Naive thymus-derived CD8-positive, alpha-beta T cell (primary cell): ENCODE measurements at regions of chr13 and their contacts with region 1.

Region 1: DNA sequence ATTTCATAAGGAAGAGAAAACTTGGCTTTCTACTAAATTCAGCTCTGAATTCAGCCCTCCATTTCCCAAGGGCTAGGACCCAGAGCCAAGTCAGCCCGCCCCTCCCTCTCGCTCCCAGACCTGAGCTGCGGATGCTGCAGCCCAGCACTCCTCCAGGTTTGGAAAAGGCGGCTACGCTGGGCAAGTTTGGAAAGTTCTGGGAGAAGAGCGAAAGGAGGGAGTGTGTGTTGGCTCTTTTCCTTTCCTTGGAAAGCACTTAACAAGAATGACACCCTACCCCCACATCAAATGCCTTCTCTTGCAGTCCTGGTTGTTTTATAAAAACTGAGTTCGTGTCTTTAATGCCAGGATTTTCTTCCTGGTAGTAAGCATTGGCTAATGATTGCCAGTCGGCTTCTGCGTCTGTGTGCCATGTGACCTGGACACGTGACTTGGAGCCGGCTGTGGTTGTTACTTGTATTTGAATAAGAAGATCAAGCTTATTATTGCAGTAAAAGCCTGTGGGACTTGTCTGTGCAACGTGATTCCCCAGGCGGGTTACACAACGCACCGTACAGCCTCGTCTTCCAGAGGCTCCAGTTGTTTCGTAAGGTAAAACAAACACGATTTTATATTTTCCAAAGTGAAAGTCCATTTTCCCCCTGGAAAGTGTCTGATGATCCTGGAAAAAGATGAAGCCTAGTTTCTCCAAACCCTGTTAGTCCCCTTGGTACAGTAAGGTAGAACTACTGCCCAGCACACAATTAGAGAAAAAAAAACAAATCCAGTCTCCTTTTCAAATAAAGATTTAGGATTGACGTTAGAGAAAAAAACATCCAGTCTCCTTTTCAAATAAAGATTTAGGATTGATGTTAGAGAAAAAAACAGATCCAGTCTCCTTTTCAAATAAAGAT is 26.9 kb upstream of the UBE2L5 start:
- DNase-seq: peak; percentile 41 to 90 (median 70)
- ATAC-seq: peak; percentile 69 to 81
- H3K4me3 Mint-ChIP-seq: peak overlapping the region; percentile 80 to 100 (median 92)
- H3K27ac Mint-ChIP-seq: peak overlapping the region; percentile 78 to 100 (median 96)
- H3K4me1 Mint-ChIP-seq: peaks cover 25 to 62% (median 49%) of the 10 kb centered on the region in 4 donors
- H3K27me3 Mint-ChIP-seq: no peaks in the 10 kb centered on the region

Region 2: GRCh38 chr13:30382836-30383525 is 12.5 kb before region 1 on chr13:
- POLR2A ChIA-PET with region 1: interaction called, 16 read pairs
- DNase-seq: peak in 1 of 10 donors; percentile 36
- ATAC-seq: peak; percentile 22 to 61
- H3K4me3 Mint-ChIP-seq: peak overlapping the region in 7 of 10 donors; percentile 13 to 64 (median 47)
- H3K27ac Mint-ChIP-seq: peak overlapping the region; percentile 19 to 83 (median 52)
- H3K4me1 Mint-ChIP-seq: peaks cover 22 to 56% (median 39%) of the 10 kb centered on the region in 4 donors
- H3K27me3 Mint-ChIP-seq: no peaks in the 10 kb centered on the region

Region 3: GRCh38 chr13:30408319-30409101 is 13.1 kb after region 1 on chr13:
- POLR2A ChIA-PET with region 1: interaction called, 41 read pairs
- DNase-seq: peak; percentile 78 to 93 (median 86)
- ATAC-seq: peak; percentile 92 to 93
- H3K4me3 Mint-ChIP-seq: peak overlapping the region; percentile 62 to 81 (median 74)
- H3K27ac Mint-ChIP-seq: peak overlapping the region; percentile 72 to 92 (median 82)
- H3K4me1 Mint-ChIP-seq: peaks cover 14 to 41% (median 35%) of the 10 kb centered on the region in 4 donors
- H3K27me3 Mint-ChIP-seq: no peaks in the 10 kb centered on the region

Region 4: GRCh38 chr13:30465585-30466357 is 70.3 kb after region 1 on chr13 and contains the start of gene HMGB1:
- POLR2A ChIA-PET with region 1: interaction called, 15 read pairs
- DNase-seq: peak; percentile 86 to 99 (median 96)
- ATAC-seq: peak; percentile 87 to 88
- H3K4me3 Mint-ChIP-seq: peak within 1 kb of the TSS; percentile 88 to 99 (median 96)
- H3K27ac Mint-ChIP-seq: peak within 1 kb of the TSS; percentile 97 to 99 (median 98)
- H3K4me1 Mint-ChIP-seq: peaks cover 10 to 47% (median 24%) of the 10 kb centered on the region in 4 donors
- H3K27me3 Mint-ChIP-seq: peaks cover 0 to 13% (median 0%) of the 10 kb centered on the region in 5 donors
- polyA plus RNA-seq, gene HMGB1: 468 to 703 (median 554) TPM

Region 5: GRCh38 chr13:30617315-30618185 is 222.1 kb after region 1 on chr13 and contains the start of gene USPL1:
- POLR2A ChIA-PET with region 1: interaction called, 18 read pairs
- DNase-seq: peak; percentile 94 to 99 (median 98)
- ATAC-seq: peak; percentile 90 to 91
- H3K4me3 Mint-ChIP-seq: no peak within 1 kb of the TSS
- H3K27ac Mint-ChIP-seq: no peak within 1 kb of the TSS
- H3K4me1 Mint-ChIP-seq: peaks cover 4 to 42% (median 29%) of the 10 kb centered on the region in 4 donors
- H3K27me3 Mint-ChIP-seq: no peaks in the 10 kb centered on the region
- polyA plus RNA-seq, gene USPL1: 13.4 to 17.6 (median 14.2) TPM